GM18951 (cell line): ENCODE measurements at regions of chr5 and their contacts with region 1.

Region 1: GRCh38 chr5:173573126-173573960 is 43.1 kb downstream of the BOD1 start:
- POLR2A ChIP-seq: no peak

Region 2: GRCh38 chr5:173001229-173001841 is 572.0 kb before region 1 on chr5:
- in situ Hi-C with region 1: no loop called
- POLR2A ChIP-seq: no peak

Region 3: GRCh38 chr5:173293817-173294672 is 279.3 kb before region 1 on chr5:
- in situ Hi-C with region 1: loop called (anchors 10 kb)
- POLR2A ChIP-seq: no peak

Region 4: DNA sequence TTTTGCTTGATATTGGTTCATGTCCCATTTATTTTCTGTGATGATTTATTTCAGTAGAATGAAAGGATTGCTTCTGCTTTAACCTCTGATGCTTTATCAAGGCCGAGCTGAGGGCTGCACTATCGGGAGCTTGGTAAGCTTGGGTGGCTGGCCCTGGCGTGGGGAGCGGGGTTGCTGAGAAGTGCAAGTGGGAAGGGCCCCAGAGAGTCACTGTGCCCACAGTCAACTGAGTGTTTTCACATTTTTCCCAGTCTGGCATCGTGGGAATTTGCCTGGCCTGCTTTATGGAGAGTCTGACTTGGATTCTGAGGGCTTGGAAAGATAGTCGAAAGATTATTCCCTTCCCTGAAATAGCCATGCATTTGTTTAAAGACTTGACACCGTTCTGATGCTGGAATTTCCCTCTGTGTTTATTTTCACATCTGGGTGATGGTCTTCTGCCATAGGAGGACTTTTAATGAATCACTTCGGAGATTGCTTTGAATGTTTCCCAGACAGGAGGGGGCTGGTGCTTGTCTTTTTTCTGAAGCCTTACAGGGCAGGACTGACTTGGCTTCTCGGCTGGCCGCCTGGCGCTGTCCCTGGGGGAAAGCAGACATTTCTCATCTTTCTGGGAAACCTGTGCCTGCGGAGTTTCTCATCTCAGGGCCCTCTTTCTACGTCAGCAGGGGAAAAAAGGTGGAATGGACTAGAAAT is 95.8 kb before region 1 on chr5:
- in situ Hi-C with region 1: no loop called
- POLR2A ChIP-seq: no peak

Region 5: DNA sequence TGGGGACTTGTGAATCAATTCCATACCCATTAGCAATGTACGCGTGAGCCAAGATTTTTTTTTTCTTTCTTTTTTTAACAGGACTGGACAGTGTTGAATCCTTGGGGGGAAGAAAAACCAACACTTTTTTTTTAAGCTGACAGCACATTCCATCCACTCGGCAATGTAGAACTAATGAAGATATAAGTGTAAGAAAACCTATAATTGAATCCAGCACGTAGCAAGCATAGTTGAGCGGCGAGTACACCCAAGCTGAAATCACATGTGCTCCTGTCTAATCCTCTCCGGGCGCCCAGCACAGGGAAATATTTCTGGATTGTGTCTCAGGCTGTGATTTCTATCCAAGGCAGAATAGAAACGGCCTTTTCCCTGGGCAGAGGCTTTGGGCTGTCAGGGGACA is 75.1 kb before region 1 on chr5:
- in situ Hi-C with region 1: no loop called
- POLR2A ChIP-seq: no peak